Activated T-helper 1 cell treated with anti-CD3 and anti-CD28 coated beads, Interleukin-12 subunit alpha, Interleukin-12 subunit beta, Interleukin-2, Interleukin-4 antibody, amounts not matched to agents 30 ng/mL and 10 ng/mL and 1 ng/mL, durations not matched to agents 14 hours and 24 hours and 36 hours (primary cell): ENCODE measurements at regions of chr4 and their contacts with region 1.

Region 1: DNA sequence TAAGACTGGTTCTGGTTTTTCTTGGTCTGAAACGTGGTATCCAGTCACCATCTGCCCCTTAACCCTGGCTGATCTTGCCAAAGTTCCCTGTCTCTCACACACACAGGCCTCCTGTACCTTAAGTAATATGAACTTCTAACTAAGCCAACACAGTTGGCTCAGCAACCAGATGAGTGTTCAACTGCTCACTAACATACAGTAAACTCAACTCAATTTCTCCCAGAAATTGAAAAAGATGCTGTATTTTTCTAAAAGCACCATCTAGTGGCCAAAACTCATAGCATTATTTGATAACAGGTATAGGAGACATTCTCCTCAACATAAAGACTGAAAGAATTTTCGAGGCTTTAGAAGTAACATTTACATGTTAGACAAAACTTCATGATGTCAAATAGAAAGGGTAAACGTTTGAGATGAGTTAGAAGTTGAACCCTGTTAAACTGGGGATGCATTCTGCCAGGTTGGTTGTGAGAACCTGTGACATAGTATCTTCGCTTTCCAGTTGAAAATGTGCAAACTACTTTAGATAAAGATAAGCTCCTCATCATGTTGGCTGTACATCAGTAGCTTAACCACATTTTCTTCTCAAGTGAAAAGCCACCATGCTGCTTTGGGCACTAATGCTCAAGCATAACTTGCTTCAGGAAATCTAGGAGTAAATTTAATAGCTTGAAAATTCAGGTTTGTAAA is 31.2 kb downstream of the CCNI start:
- DNase-seq: no peak
- H3K4me3 Mint-ChIP-seq: no peak overlapping the region
- H3K27ac Mint-ChIP-seq: no peak overlapping the region
- H3K4me1 Mint-ChIP-seq: no peaks in the 10 kb centered on the region
- H3K27me3 Mint-ChIP-seq: peaks cover under 1% of the 10 kb centered on the region

Region 2: GRCh38 chr4:76430519-76431388 is 613.9 kb before region 1 on chr4:
- intact Hi-C with region 1: loop called (anchors 2 kb)
- DNase-seq: no peak
- H3K4me3 Mint-ChIP-seq: no peak overlapping the region
- H3K27ac Mint-ChIP-seq: no peak overlapping the region
- H3K4me1 Mint-ChIP-seq: no peaks in the 10 kb centered on the region
- H3K27me3 Mint-ChIP-seq: peaks cover 23% of the 10 kb centered on the region

Region 3: DNA sequence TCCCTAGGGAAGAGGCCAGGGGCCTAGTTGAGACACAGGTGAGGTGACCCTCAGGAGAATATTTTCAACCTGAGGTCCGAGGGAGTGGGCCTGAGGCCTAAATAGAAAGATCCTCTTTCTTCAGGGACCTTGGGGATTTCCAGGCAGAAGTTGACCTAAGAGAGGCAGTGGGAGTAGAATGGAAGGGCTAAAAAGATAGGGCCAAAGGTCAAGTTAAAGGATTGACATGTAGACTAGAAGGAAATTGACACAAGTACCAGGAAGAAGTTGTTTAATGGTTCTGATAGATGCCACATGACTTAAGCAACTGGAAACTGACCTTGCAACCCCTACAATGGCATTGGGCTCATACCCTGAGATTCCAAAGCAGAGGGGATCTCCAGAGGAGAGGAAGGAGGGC is 532.7 kb before region 1 on chr4:
- intact Hi-C with region 1: loop called (anchors 1 kb)
- DNase-seq: no peak
- H3K4me3 Mint-ChIP-seq: no peak overlapping the region
- H3K27ac Mint-ChIP-seq: no peak overlapping the region
- H3K4me1 Mint-ChIP-seq: no peaks in the 10 kb centered on the region
- H3K27me3 Mint-ChIP-seq: peaks cover 3% of the 10 kb centered on the region

Region 4: GRCh38 chr4:76758290-76758882 is 286.2 kb before region 1 on chr4:
- intact Hi-C with region 1: loop called (anchors 10 kb)
- DNase-seq: no peak
- H3K4me3 Mint-ChIP-seq: no peak overlapping the region
- H3K27ac Mint-ChIP-seq: no peak overlapping the region
- H3K4me1 Mint-ChIP-seq: peaks cover 12% of the 10 kb centered on the region
- H3K27me3 Mint-ChIP-seq: peaks cover 3% of the 10 kb centered on the region

Region 5: DNA sequence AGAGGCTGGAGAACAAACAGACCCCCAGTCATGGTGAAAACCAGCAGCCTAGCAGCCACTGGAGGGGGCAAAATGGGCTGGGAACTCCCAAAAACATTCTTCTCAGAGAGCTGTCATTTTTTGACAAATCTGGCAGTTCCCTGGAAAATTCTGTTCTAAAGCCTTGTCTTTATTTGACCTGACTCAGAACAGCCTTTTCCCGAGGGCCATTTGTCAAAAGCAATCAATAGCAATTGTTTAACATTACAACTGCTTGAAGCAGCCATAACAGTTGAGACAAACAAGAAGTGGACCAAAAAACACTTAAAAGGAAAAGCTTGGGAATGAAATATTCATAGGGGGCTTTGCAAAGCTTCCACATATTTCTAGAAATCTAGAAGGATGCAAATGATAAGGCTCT is 186.3 kb before region 1 on chr4:
- intact Hi-C with region 1: loop called (anchors 1 kb)
- DNase-seq: no peak
- H3K4me3 Mint-ChIP-seq: no peak overlapping the region
- H3K27ac Mint-ChIP-seq: no peak overlapping the region
- H3K4me1 Mint-ChIP-seq: no peaks in the 10 kb centered on the region
- H3K27me3 Mint-ChIP-seq: peaks cover 13% of the 10 kb centered on the region

Region 6: DNA sequence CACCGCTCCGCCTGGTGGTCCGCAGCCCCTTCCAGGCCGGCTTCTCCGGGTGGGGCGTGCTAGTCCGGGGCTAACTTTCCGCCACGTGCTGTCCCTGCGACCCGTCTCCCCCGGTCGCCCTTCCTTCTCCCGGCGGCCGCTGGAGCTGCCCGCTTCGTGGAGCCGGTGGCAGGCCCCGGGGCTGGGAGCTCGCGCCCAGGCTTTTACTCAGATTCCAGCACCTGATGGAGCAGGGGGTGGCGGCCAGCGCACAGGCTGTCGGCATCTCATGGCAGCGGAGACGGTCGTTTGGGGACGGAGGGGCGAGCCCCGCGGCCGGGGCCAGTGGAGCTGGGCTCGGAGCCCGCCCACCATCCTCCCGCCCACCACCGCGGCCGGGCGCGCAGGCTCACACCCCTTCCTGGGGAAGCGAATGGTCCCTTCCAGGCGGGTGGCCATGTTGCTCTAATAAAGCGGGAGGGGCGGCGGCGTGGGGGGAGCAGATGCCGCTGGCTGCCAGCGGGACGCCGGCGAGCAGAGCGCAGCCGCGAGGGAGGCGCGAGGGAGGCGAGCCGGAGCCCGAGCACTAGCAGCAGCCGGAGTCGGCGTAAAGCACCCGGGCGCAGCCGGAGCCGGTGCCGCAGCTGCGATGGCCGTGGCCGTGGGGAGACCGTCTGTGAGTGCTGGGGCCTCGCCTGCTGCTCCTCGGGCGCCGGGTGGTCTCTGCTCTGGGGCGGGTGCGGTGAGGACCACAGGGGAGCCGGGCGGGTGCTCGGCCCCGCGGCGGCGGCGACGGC is 95.1 kb before region 1 on chr4 and contains the start of gene SEPTIN11:
- intact Hi-C with region 1: loop called (anchors 1 kb)
- DNase-seq: peak; percentile 56
- H3K4me3 Mint-ChIP-seq: peak within 1 kb of the TSS; percentile 84
- H3K27ac Mint-ChIP-seq: peak within 1 kb of the TSS; percentile 68
- H3K4me1 Mint-ChIP-seq: peaks cover 14% of the 10 kb centered on the region
- H3K27me3 Mint-ChIP-seq: peaks cover 77% of the 10 kb centered on the region
- total RNA-seq, gene SEPTIN11: 22.4 and 23.6 TPM in 2 replicates

Region 7: DNA sequence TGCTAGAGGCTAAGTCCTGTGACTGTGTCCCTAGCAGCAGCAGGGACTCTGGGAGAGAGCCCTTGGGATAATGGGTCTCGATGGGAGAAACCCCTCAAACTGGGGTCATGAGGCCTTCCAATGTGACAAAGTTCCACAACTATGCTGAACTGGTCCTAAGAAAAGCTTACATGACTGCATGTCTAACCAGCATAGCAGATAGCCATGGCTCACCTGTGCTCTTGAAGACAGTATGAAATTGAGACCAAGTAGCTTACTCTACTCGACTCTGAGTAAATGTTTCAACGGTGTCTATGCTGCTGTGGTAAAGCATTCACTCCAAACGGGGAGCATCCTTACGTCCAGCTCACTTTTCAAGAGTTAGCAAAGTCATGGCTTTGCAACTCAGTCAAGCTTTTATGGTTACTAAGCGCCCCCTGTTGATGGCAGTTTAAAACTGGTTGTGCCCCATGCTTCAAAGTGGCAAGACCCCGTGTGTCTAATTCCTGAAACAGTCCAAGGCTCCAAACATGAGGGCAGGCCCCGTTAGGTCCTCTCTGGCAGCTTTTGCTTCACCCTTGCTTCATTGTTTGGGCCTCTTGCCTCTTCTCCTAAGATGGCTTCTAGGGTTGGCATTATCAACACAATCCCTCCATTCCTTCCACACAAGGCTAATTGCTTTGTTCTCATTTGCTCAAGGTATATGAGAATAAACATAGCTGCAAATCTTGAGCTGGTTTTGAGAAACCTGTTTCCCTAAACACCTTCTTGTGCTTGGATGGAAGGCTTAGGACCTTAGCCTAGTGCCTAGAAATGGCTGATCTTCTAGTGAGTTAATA is 159.0 kb after region 1 on chr4:
- intact Hi-C with region 1: loop called (anchors 1 kb)
- DNase-seq: peak; percentile 47
- H3K4me3 Mint-ChIP-seq: no peak overlapping the region
- H3K27ac Mint-ChIP-seq: no peak overlapping the region
- H3K4me1 Mint-ChIP-seq: peaks cover 13% of the 10 kb centered on the region
- H3K27me3 Mint-ChIP-seq: peaks cover 15% of the 10 kb centered on the region